Dorsolateral prefrontal cortex (tissue), 120 donors: ENCODE measurements at regions of chr2 and their contacts with region 1.

Region 1: GRCh38 chr2:1910592-1911246 is 166.4 kb upstream of the PXDN start:
- DNase-seq: peak in 3 of 10 donors; percentile 29 to 57 (median 46)
- H3K4me3 ChIP-seq: peak overlapping the region in 5 of 59 donors; percentile 3 to 20 (median 9)
- H3K27ac ChIP-seq: peak overlapping the region in 57 of 59 donors; percentile 1 to 83 (median 66)
- H3K27me3 ChIP-seq: peaks cover 0 to 4% (median 0%) of the 10 kb centered on the region in 45 donors
- CTCF ChIP-seq: peak; percentile 21 to 83 (median 69)

Region 2: DNA sequence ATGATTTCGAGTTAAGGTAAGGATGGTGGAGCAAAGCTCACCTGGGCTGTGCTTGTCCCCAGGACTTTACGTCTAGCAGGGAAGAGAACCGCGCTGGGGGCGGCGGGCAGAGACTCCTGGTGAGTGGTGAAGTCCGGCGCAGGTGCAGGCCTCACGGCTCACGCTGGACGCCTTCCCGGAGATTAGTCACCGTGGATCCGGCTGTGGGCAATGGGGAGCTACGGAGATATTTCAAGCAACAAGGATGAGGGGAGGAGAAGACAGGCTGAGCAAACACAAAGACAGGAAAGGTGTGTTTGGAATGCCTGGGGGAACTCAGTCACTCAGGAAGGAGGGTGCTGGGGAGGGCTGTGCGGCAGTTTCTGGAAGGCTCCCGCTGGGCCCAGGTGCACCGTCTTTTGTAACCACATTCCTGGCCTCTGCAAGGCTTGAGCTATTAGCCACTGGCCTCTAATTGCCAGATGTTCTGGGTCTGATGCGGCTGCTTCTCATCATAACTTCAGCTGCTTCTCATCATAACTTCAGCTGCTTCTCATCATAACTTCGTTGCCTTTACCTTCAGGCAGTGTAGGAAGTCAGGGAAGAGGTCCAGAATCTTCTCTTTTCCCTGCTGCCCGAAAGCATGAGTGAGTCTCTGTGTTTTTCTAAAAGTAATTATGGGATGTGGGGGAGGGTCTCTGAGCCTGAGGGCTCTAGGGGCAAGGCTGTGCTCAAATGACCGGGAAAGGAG is 285.3 kb before region 1 on chr2:
- intact Hi-C with region 1: no loop called
- DNase-seq: peak in 3 of 10 donors; percentile 26 to 76 (median 56)
- H3K4me3 ChIP-seq: no peak overlapping the region
- H3K27ac ChIP-seq: no peak overlapping the region
- H3K27me3 ChIP-seq: peaks cover 0 to 6% (median 0%) of the 10 kb centered on the region in 45 donors
- CTCF ChIP-seq: no peak

Region 3: GRCh38 chr2:1990724-1991123 is 80.0 kb after region 1 on chr2:
- intact Hi-C with region 1: loop called in 1 of 2 experiments (anchors 5 kb)
- DNase-seq: peak; percentile 81 to 95 (median 92)
- H3K4me3 ChIP-seq: peak overlapping the region in 8 of 59 donors; percentile 1 to 31 (median 20)
- H3K27ac ChIP-seq: peak overlapping the region; percentile 34 to 97 (median 85)
- H3K27me3 ChIP-seq: no peaks in the 10 kb centered on the region
- CTCF ChIP-seq: peak in 13 of 56 donors; percentile 7 to 36 (median 16)

Region 4: GRCh38 chr2:2014251-2014771 is 103.6 kb after region 1 on chr2:
- intact Hi-C with region 1: loop called in 1 of 2 experiments (anchors 2 kb)
- DNase-seq: peak; percentile 76 to 95 (median 92)
- H3K4me3 ChIP-seq: peak overlapping the region in 33 of 59 donors; percentile 1 to 53 (median 22)
- H3K27ac ChIP-seq: peak overlapping the region; percentile 40 to 97 (median 87)
- H3K27me3 ChIP-seq: no peaks in the 10 kb centered on the region
- CTCF ChIP-seq: peak in 8 of 56 donors; percentile 2 to 21 (median 12)

Region 5: GRCh38 chr2:2044269-2045057 is 133.7 kb after region 1 on chr2:
- intact Hi-C with region 1: no loop called
- DNase-seq: peak in 1 of 10 donors; percentile 26
- H3K4me3 ChIP-seq: no peak overlapping the region
- H3K27ac ChIP-seq: peak overlapping the region in 8 of 59 donors; percentile 8 to 52 (median 28)
- H3K27me3 ChIP-seq: no peaks in the 10 kb centered on the region
- CTCF ChIP-seq: no peak

Region 6: GRCh38 chr2:2112416-2113105 is 201.8 kb after region 1 on chr2:
- intact Hi-C with region 1: loop called in 1 of 2 experiments (anchors 10 kb)
- DNase-seq: no peak
- H3K4me3 ChIP-seq: no peak overlapping the region
- H3K27ac ChIP-seq: peak overlapping the region in 15 of 59 donors; percentile 2 to 61 (median 20)
- H3K27me3 ChIP-seq: peaks cover 0 to 13% (median 0%) of the 10 kb centered on the region in 45 donors
- CTCF ChIP-seq: no peak

Region 7: GRCh38 chr2:2121887-2122286 is 211.2 kb after region 1 on chr2:
- intact Hi-C with region 1: loop called (anchors 5 to 10 kb)
- DNase-seq: peak in 4 of 10 donors; percentile 56 to 73 (median 64)
- H3K4me3 ChIP-seq: no peak overlapping the region
- H3K27ac ChIP-seq: no peak overlapping the region
- H3K27me3 ChIP-seq: no peaks in the 10 kb centered on the region
- CTCF ChIP-seq: no peak